Adrenal gland (tissue), 19 donors: ENCODE measurements at regions of chr16 and their contacts with region 1.

Region 1: GRCh38 chr16:5379954-5380353 is 282.4 kb upstream of the EEF2KMT start:
- DNase-seq: no peak
- H3K4me3 ChIP-seq: no peak overlapping the region
- H3K27ac ChIP-seq: no peak overlapping the region
- H3K4me1 ChIP-seq: no peaks in the 10 kb centered on the region
- H3K27me3 ChIP-seq: no peaks in the 10 kb centered on the region
- CTCF ChIP-seq: no peak
- POLR2A ChIP-seq: no peak

Region 2: DNA sequence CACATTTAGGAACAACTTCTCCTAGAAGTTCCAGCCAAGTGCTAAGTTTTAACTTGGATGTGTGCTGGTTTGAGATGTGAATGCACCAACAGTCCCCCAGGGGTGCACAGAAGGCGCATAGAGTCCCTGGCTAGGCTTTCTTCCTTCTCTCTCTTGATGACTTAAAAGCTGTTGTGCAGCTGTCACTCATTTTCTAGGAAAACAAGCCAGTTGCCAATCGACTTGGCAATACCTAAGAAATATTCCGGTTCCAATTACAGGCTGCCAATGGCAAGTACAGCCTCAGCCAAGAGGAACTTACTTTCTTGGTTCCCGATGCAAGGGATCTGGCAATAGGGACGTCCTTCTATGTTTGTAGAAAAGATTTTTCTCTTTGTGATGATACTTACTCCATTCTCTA is 15.8 kb before region 1 on chr16:
- intact Hi-C with region 1: no loop called
- DNase-seq: no peak
- H3K4me3 ChIP-seq: no peak overlapping the region
- H3K27ac ChIP-seq: no peak overlapping the region
- H3K4me1 ChIP-seq: no peaks in the 10 kb centered on the region
- H3K27me3 ChIP-seq: no peaks in the 10 kb centered on the region
- CTCF ChIP-seq: no peak
- POLR2A ChIP-seq: no peak

Region 3: GRCh38 chr16:5442054-5442453 is 62.1 kb after region 1 on chr16:
- intact Hi-C with region 1: loop called in 1 of 2 experiments (anchors 10 kb)
- DNase-seq: no peak
- H3K4me3 ChIP-seq: no peak overlapping the region
- H3K27ac ChIP-seq: no peak overlapping the region
- H3K4me1 ChIP-seq: no peaks in the 10 kb centered on the region
- H3K27me3 ChIP-seq: no peaks in the 10 kb centered on the region
- CTCF ChIP-seq: no peak
- POLR2A ChIP-seq: no peak